T-cell (primary cell): ENCODE measurements at regions of chr22 and their contacts with region 1.

Region 1: GRCh38 chr22:40376149-40376548 is 5.8 kb downstream of the SGSM3 start:
- DNase-seq: no peak
- ATAC-seq: no peak
- H3K4me3 ChIP-seq: no peak overlapping the region
- H3K4me3 Mint-ChIP-seq: no peak overlapping the region
- H3K27ac ChIP-seq: no peak overlapping the region
- H3K27ac Mint-ChIP-seq: no peak overlapping the region
- H3K4me1 ChIP-seq: peaks cover 6 to 10% of the 10 kb centered on the region in 2 experiments
- H3K4me1 Mint-ChIP-seq: peaks cover 46 to 48% (median 46%) of the 10 kb centered on the region in 3 donors
- H3K27me3 ChIP-seq: no peaks in the 10 kb centered on the region
- H3K27me3 Mint-ChIP-seq: no peaks in the 10 kb centered on the region

Region 2: DNA sequence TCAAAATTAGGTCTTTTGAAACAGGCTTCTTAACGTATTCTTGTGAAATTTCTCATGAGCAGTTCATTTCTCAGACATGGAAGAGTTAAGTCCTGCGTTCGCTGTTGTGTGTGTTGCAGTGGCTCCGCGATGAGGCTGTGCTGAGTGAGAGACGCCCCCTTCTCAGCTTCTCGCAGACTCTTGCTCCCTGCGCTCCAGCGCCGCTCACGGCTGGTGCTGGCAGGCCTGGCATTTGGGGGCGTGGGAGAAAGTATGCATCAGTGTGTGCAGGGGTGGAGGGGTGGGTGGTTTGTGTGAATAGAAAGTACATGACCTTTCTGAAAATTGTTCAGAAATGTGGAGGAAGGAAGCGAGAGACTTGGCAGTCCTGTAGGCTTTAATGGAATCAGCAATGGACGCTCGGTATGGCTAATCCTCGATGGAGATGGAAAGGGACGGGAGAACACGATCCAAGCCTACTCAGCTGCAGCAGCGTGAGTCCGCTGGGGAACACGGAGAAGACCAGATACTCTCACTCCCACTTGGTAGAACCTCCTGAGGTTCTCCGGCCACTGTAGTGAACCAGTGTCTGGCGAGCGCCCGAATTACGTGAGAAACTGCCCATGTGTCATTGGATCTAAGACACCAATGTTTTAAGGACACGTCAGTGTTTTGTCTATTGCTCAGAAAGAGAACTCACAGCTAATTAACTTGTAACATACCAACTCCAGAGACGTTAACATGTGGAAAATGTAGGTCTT is 970.6 kb before region 1 on chr22:
- CTCF ChIA-PET with region 1: no interaction called
- POLR2A ChIA-PET with region 1: interaction called in 1 of 2 experiments, 17 read pairs
- DNase-seq: peak in 2 of 35 experiments; percentile 16 to 39
- ATAC-seq: peak in 1 of 4 experiments; percentile 75
- H3K4me3 ChIP-seq: no peak overlapping the region
- H3K4me3 Mint-ChIP-seq: no peak overlapping the region
- H3K27ac ChIP-seq: no peak overlapping the region
- H3K27ac Mint-ChIP-seq: peak overlapping the region in 1 of 2 donors; percentile 7
- H3K4me1 ChIP-seq: peaks cover 6 to 32% of the 10 kb centered on the region in 2 experiments
- H3K4me1 Mint-ChIP-seq: peaks cover 66 to 73% (median 67%) of the 10 kb centered on the region in 3 donors
- H3K27me3 ChIP-seq: no peaks in the 10 kb centered on the region
- H3K27me3 Mint-ChIP-seq: no peaks in the 10 kb centered on the region